Mammary epithelial cell (primary cell): ENCODE measurements at regions of chr7 and their contacts with region 1.

Region 1: DNA sequence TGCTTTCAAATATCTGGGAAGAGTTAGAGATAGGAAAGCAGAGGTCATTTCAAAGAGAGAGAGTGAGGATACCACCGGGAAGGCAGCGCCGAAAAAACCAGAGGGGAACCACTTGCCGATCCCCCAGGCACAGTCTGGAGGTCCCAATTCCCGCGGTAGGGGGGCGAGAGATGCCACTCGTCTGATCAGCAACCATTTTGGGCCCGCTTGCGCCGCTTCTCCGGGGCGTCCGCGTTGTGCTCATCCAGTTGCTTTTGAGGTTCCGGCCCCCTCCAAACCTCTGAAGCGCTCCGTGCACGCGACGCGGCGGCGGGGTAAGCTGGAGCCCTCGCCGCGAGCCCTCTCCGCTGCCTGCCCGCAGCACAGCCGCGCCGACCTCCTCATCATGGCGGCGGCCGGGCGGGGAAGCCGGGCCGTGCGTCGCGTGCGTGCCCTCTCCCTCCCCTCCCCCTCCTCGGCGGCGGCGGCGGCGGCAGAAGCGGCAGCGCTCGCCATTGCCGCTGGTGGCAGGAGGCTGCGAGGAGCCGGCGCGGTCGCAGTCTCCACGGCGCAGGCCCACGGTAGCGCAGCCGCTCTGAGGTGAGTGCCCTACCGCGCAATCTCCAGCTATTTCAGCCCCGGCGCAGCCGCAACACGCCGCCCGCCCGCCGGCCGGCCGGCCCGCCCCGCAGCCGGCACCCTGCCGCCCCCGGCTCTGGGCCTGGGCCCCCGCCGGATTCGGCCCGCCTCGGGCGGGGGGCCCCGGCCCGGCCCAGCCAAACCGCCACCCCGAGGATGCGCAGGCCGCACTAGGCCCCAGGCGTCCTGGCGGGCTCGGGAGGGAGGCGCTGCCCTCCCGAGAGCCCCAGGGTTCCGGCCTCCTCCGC is at the start of gene NRF1:
- DNase-seq: peak; percentile 90
- H3K4me3 ChIP-seq: peak within 1 kb of the TSS; percentile 77 to 95 (median 87)
- H3K27ac ChIP-seq: peak within 1 kb of the TSS; percentile 80
- H3K4me1 ChIP-seq: peaks cover 27% of the 10 kb centered on the region
- H3K27me3 ChIP-seq: no peaks in the 10 kb centered on the region
- CTCF ChIP-seq: peak in 1 of 2 donors; percentile 12
- total RNA-seq, gene NRF1: 11.3 to 14.3 TPM

Region 2: DNA sequence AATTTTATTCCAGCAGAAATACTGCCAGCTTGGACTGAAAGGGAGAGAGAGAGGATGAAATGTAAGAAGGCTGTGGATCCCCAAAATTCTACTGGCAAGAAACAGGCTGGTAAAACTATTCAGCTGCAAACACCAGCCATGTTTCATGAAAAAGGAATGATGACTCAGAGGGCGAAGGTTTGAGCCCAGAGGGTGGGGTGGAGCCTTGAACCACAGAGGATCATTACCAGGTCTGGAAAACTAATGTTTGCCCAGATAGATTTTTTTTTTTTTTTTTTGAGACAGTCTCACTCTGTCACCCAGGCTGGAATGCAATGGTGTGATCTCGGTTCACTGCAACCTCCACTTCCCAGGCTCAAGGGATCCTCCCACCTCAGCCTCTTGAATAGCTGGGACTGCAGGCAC is 41.7 kb before region 1 on chr7:
- CTCF ChIA-PET with region 1: no interaction called
- dilution Hi-C with region 1: no loop called
- in situ Hi-C with region 1: no loop called
- intact Hi-C with region 1: loop called (anchors 1 kb)
- DNase-seq: peak; percentile 91
- H3K4me3 ChIP-seq: no peak overlapping the region
- H3K27ac ChIP-seq: peak overlapping the region; percentile 59
- H3K4me1 ChIP-seq: peaks cover 5% of the 10 kb centered on the region
- H3K27me3 ChIP-seq: no peaks in the 10 kb centered on the region
- CTCF ChIP-seq: no peak